ENCODE measurements at regions of chr10 and their contacts with region 1.

Region 1: GRCh38 chr10:103139803-103140202 is 53.3 kb downstream of the NT5C2 start:
- DNase-seq: no peak
- ATAC-seq: no peak
- H3K4me3 ChIP-seq: no peak overlapping the region
- H3K4me3 Mint-ChIP-seq: no peak overlapping the region
- H3K27ac ChIP-seq: no peak overlapping the region
- H3K27ac Mint-ChIP-seq: no peak overlapping the region
- H3K4me1 ChIP-seq: no peaks in the 10 kb centered on the region
- H3K4me1 Mint-ChIP-seq: no peaks in the 10 kb centered on the region
- H3K27me3 ChIP-seq: no peaks in the 10 kb centered on the region
- H3K27me3 Mint-ChIP-seq: no peaks in the 10 kb centered on the region
- CTCF ChIP-seq: no peak

Region 2: GRCh38 chr10:103238506-103239252 is 98.9 kb after region 1 on chr10:
- CTCF ChIA-PET with region 1: no interaction called
- POLR2A ChIA-PET with region 1: no interaction called
- intact Hi-C with region 1: loop called in 1 of 2 experiments (anchors 10 kb)
- DNase-seq: no peak
- ATAC-seq: no peak
- H3K4me3 ChIP-seq: no peak overlapping the region
- H3K4me3 Mint-ChIP-seq: no peak overlapping the region
- H3K27ac ChIP-seq: no peak overlapping the region
- H3K27ac Mint-ChIP-seq: no peak overlapping the region
- H3K4me1 ChIP-seq: peaks cover 5% of the 10 kb centered on the region
- H3K4me1 Mint-ChIP-seq: peaks cover 6% of the 10 kb centered on the region
- H3K27me3 ChIP-seq: no peaks in the 10 kb centered on the region
- H3K27me3 Mint-ChIP-seq: no peaks in the 10 kb centered on the region
- CTCF ChIP-seq: no peak

Measured in CD4-positive, alpha-beta T cell (primary cell).